ENCODE measurements at regions of chr10 and their contacts with region 1.

Region 1: GRCh38 chr10:29257106-29257783 is 31.6 kb upstream of the LYZL1 start:
- DNase-seq: peak; percentile 19 to 81
- H3K4me3 ChIP-seq: peak overlapping the region; percentile 32; the same call in 1 of the 2 replicates
- H3K27ac ChIP-seq: peak overlapping the region; percentile 65
- H3K4me1 ChIP-seq: peaks cover 48% of the 10 kb centered on the region
- H3K27me3 ChIP-seq: no peaks in the 10 kb centered on the region
- CTCF ChIP-seq: no peak

Region 2: DNA sequence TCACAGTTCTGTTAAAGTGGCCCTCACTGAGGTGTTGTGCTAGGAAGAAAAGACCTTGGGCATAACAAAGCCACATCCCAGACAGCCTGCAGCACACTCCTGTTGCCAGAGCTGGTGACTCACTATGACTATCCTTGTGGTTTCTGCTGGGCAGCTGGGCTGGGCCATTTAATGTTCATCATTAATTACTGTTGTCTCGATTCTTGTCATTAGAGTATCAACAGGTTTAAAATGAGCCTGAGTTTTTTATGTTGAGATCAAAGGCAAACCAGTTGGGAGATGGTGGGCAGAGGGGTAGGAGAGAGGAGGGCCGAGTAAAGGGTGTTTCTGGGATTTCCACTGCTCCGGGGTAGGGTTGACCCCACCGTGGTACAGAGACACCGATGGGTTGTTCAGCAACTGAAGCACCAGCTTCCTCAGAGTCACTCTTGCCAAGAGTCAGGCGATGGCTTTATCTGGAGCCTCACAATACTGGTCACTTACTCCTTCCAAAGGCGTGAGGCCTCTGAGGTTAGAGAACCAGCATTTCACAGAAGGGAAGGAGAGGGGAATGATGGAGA is 97.1 kb before region 1 on chr10:
- CTCF ChIA-PET with region 1: no interaction called
- POLR2A ChIA-PET with region 1: interaction called, 4 read pairs
- intact Hi-C with region 1: loop called (anchors 5 kb)
- DNase-seq: peak; percentile 75 to 83
- H3K4me3 ChIP-seq: no peak overlapping the region
- H3K27ac ChIP-seq: peak overlapping the region; percentile 84
- H3K4me1 ChIP-seq: peaks cover 25% of the 10 kb centered on the region
- H3K27me3 ChIP-seq: no peaks in the 10 kb centered on the region
- CTCF ChIP-seq: no peak